ENCODE measurements at regions of chr18 and their contacts with region 1.

Region 1: DNA sequence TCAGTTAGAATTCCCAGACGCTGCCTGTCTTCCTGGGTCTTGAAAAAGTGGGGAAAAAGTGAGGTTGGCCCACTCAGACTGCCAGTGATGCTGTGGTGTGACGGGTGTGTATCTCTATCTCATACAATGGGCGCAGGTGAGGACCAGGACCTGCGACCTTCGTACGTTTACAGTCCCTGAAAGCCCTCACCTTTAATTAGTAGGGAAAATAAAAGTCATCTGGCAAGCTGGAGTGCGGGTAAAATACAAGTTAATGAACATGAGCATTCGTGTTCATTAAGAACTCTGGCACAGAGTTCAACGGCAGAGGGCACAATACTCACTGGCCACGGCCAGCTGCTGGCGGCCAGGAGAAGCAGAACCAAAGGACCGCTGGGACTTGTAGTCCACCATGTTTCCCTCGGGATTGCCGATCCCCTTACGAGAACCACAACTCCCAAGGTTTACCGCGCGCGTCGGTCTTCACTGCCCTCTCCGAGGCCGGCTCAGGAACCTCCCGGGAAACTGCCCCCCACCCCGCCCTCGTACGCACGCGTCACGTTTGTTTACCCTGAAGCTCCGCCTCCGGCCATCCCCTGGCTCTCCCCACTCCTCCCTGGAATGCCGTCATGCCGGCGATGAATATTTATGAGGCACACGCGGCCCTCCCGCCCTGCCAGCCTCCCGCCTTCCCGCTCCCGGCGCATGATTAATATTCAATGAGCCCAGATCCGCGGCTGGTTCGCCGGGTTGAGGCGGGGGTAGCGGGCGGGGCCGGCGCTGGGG is 488 bp upstream of the PHLPP1 start:
- DNase-seq: peak; percentile 87 to 97 (median 92)
- ATAC-seq: peak; percentile 93
- H3K4me3 ChIP-seq: peak overlapping the region; percentile 57
- H3K27ac ChIP-seq: peak overlapping the region; percentile 91; the same call in 2 of the 3 replicates
- H3K4me1 ChIP-seq: peaks cover 8 to 14% of the 10 kb centered on the region in 2 experiments; a peak in 4 of 5 replicates
- H3K27me3 ChIP-seq: no peaks in the 10 kb centered on the region
- CTCF ChIP-seq: peak; percentile 64 to 69 (median 68)
- EP300 ChIP-seq: no peak
- POLR2A ChIP-seq: no peak; the same call in 1 of the 2 replicates
- RAD21 ChIP-seq: peak; percentile 68 to 76

Region 2: DNA sequence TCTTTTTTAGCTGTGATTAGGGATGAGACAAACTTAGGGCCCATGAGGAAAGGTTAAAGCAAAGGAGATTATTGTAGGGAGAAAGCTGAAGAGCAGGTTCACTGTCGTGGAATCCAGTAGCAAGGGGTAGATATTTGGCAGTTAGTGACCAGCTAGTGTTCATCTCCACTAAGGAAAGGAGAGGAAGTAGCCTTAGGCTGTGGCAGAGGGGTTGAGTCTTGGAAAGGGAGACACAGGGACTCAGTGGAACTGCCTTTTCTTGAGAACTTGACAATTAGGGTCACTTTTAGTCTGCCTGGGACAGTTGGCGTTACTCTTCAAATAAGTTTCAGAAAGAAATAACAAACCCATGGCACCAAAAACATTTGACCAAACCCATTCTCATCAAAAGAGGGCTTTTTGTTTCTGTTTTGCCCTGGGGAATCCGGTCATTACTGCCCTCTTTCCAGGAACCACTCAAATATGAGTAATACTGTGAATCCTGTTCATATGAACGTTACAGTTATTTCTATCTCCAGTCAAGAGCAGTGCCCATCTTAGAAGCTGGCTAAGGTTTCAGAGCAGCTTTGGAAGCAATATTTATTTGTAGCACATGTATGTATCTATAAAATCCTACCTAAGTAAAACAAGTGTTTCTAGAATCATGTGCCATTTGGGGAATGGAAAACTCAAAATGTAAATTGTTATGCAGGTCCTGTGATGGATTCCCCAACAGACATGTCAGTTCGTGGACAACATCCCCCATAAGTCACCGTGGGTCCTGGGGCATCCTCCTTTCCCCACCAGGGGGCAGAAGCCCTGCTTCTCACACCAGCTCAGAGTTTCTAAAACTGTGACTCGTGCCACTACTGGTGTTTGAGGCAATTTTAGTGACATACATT is 76.8 kb before region 1 on chr18:
- CTCF ChIA-PET with region 1: no interaction called
- POLR2A ChIA-PET with region 1: no interaction called
- in situ Hi-C with region 1: no loop called
- intact Hi-C with region 1: loop called (anchors 2 kb)
- DNase-seq: peak; percentile 69 to 71 (median 70)
- ATAC-seq: peak; percentile 95
- H3K4me3 ChIP-seq: no peak overlapping the region
- H3K27ac ChIP-seq: no peak overlapping the region
- H3K4me1 ChIP-seq: peaks cover 0 to 6% of the 10 kb centered on the region in 2 experiments; a peak in 3 of 5 replicates
- H3K27me3 ChIP-seq: no peaks in the 10 kb centered on the region
- CTCF ChIP-seq: peak; percentile 72 to 87 (median 78)
- EP300 ChIP-seq: no peak
- POLR2A ChIP-seq: no peak
- RAD21 ChIP-seq: peak; percentile 62 to 79

Region 3: DNA sequence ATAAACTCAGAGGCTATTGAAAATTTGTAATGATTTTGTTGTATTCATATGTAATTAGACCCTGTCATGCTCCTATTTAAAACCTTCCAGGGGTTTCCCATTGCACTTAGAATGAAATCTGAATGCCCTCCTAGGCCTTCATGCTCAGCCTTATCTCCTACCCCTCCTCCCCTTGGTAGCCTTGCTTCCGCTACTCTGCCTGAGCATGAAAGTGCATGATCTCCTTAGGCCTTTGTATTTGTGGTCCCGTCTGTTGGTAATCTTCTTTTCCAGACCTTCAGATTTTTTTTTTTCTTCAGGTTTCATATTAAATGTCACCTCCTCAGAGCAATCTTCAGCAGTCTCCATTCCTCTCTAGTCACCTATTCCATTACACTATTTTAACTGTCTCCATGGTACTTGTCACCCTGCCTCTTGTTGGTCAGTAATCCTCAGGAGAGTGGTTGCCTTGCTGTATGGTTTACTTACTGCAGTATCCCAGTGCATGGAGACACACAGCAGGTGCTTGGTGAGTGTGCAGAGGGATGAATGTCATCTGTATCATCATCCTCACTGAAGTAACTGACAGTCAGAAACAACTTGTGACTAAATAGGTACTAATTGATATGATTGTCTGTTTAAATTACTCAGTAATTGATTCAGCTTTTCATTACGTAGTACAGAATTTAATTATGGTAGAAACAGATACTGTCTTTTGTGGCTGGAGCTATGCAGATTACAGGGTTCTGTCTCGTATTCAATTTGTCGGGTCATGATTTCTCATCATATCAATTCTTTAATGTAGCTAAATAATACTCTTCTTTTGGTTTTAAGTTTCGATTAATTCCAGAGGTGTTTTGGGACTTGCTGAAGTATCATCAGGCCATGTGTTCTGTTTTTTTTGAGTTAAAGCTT is 64.4 kb after region 1 on chr18:
- CTCF ChIA-PET with region 1: no interaction called
- POLR2A ChIA-PET with region 1: no interaction called
- in situ Hi-C with region 1: no loop called
- intact Hi-C with region 1: loop called (anchors 5 kb)
- DNase-seq: peak in 2 of 4 experiments; percentile 40 to 58
- ATAC-seq: peak; percentile 88
- H3K4me3 ChIP-seq: no peak overlapping the region
- H3K27ac ChIP-seq: peak overlapping the region; percentile 48; the same call in 1 of the 3 replicates
- H3K4me1 ChIP-seq: peaks cover 0 to 10% of the 10 kb centered on the region in 2 experiments; a peak in 1 of 5 replicates
- H3K27me3 ChIP-seq: no peaks in the 10 kb centered on the region
- CTCF ChIP-seq: no peak
- EP300 ChIP-seq: no peak
- POLR2A ChIP-seq: no peak
- RAD21 ChIP-seq: no peak

Region 4: DNA sequence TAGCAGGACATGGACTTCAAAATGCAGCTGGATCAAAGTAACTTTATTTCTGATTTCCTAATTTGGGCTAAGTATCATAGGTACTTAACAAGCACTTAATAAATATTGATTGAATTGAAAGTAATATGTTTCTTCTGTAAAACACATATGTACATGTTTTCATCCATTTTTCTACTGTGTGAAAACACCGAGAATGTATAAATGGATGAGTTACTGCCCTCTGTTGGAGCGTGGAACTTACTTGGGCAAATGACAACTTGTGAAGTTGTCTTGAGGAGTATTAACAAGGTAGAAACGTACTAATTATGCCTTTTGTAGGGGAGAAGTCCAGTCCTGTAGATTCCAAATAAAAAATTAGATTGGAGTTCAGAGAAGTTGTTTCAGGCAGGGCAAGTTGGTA is 87.7 kb after region 1 on chr18:
- CTCF ChIA-PET with region 1: no interaction called
- POLR2A ChIA-PET with region 1: interaction called, 3 read pairs
- in situ Hi-C with region 1: no loop called
- intact Hi-C with region 1: loop called (anchors 5 kb)
- DNase-seq: no peak
- ATAC-seq: peak; percentile 53; the same call in 1 of the 3 replicates
- H3K4me3 ChIP-seq: no peak overlapping the region
- H3K27ac ChIP-seq: no peak overlapping the region
- H3K4me1 ChIP-seq: peaks cover 0 to 3% of the 10 kb centered on the region in 2 experiments; a peak in 2 of 5 replicates
- H3K27me3 ChIP-seq: no peaks in the 10 kb centered on the region
- CTCF ChIP-seq: peak in 1 of 3 experiments; percentile 36; a peak in 2 of 6 replicates
- EP300 ChIP-seq: no peak
- POLR2A ChIP-seq: no peak
- RAD21 ChIP-seq: peak in 1 of 2 experiments; percentile 54; a peak in 3 of 4 replicates

Region 5: GRCh38 chr18:62862466-62862865 is 147.6 kb after region 1 on chr18:
- CTCF ChIA-PET with region 1: no interaction called
- POLR2A ChIA-PET with region 1: no interaction called
- in situ Hi-C with region 1: no loop called
- intact Hi-C with region 1: no loop called
- DNase-seq: no peak
- ATAC-seq: no peak
- H3K4me3 ChIP-seq: no peak overlapping the region
- H3K27ac ChIP-seq: no peak overlapping the region
- H3K4me1 ChIP-seq: peaks cover 0 to 4% of the 10 kb centered on the region in 2 experiments; a peak in 1 of 5 replicates
- H3K27me3 ChIP-seq: no peaks in the 10 kb centered on the region
- CTCF ChIP-seq: no peak
- EP300 ChIP-seq: no peak
- POLR2A ChIP-seq: no peak
- RAD21 ChIP-seq: no peak

Region 6: DNA sequence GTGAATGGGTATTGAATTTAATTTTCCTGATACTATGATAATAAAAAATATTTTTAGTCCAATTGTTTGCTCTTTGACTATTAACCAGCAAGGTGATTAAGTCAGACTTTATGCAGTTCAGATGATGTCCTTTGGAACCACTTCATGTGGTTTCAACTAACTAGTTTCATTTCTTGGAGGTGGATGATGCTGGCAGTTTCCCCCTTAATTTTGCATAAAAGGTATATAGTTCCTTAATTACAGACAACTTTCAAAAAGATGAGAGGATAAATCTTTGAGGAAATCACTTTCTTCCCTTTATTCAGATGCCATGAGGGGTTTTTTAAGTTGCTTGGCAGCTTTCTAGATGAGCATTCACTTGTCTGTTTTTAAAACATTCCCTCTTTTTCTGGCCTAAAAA is 223.6 kb after region 1 on chr18:
- CTCF ChIA-PET with region 1: no interaction called
- POLR2A ChIA-PET with region 1: no interaction called
- in situ Hi-C with region 1: no loop called
- intact Hi-C with region 1: loop called (anchors 5 kb)
- DNase-seq: no peak
- ATAC-seq: no peak
- H3K4me3 ChIP-seq: no peak overlapping the region
- H3K27ac ChIP-seq: no peak overlapping the region; the same call in 2 of the 3 replicates
- H3K4me1 ChIP-seq: peaks cover 0 to 4% of the 10 kb centered on the region in 2 experiments; a peak in 3 of 5 replicates
- H3K27me3 ChIP-seq: no peaks in the 10 kb centered on the region
- CTCF ChIP-seq: no peak
- EP300 ChIP-seq: no peak
- POLR2A ChIP-seq: no peak
- RAD21 ChIP-seq: no peak

Region 7: GRCh38 chr18:62957885-62958472 is 243.1 kb after region 1 on chr18:
- CTCF ChIA-PET with region 1: interaction called, 5 read pairs
- POLR2A ChIA-PET with region 1: no interaction called
- in situ Hi-C with region 1: loop called (anchors 10 kb)
- intact Hi-C with region 1: loop called (anchors 1 kb)
- DNase-seq: peak in 1 of 4 experiments; percentile 55
- ATAC-seq: peak; percentile 93
- H3K4me3 ChIP-seq: no peak overlapping the region
- H3K27ac ChIP-seq: no peak overlapping the region
- H3K4me1 ChIP-seq: 0 out of 5 replicates have a peak, but pooled peaks cover 0 to 4% of the 10 kb centered on the region in 2 experiments
- H3K27me3 ChIP-seq: no peaks in the 10 kb centered on the region
- CTCF ChIP-seq: peak; percentile 42 to 51 (median 49)
- EP300 ChIP-seq: no peak
- POLR2A ChIP-seq: no peak
- RAD21 ChIP-seq: peak; percentile 49 to 70

Region 8: GRCh38 chr18:62982600-62983251 is 267.9 kb after region 1 on chr18:
- CTCF ChIA-PET with region 1: interaction called, 3 read pairs
- POLR2A ChIA-PET with region 1: interaction called, 3 read pairs
- in situ Hi-C with region 1: no loop called
- intact Hi-C with region 1: loop called (anchors 10 kb)
- DNase-seq: peak; percentile 38 to 63 (median 46)
- ATAC-seq: peak; percentile 84
- H3K4me3 ChIP-seq: no peak overlapping the region
- H3K27ac ChIP-seq: no peak overlapping the region
- H3K4me1 ChIP-seq: no peaks in the 10 kb centered on the region; a peak in 3 of 5 replicates
- H3K27me3 ChIP-seq: no peaks in the 10 kb centered on the region
- CTCF ChIP-seq: peak; percentile 56 to 74 (median 73)
- EP300 ChIP-seq: no peak
- POLR2A ChIP-seq: no peak
- RAD21 ChIP-seq: peak; percentile 69 to 85

Measured in K562 (cell line).